ENCODE measurements at regions of chr3 and their contacts with region 1.

Region 1: GRCh38 chr3:44976002-44976815 is at the starts of genes EXOSC7 and ZDHHC3:
- DNase-seq: peak; percentile 75 to 95 (median 86)
- ATAC-seq: peak; percentile 97
- H3K4me3 ChIP-seq: peak within 1 kb of the TSS; percentile 97 to 99
- H3K4me3 Mint-ChIP-seq: peak within 1 kb of the TSS; percentile 93
- H3K27ac ChIP-seq: peak within 1 kb of the TSS; percentile 90 to 94
- H3K27ac Mint-ChIP-seq: peak within 1 kb of the TSS; percentile 95
- H3K4me1 ChIP-seq: peaks cover 37% of the 10 kb centered on the region
- H3K4me1 Mint-ChIP-seq: peaks cover 65% of the 10 kb centered on the region
- H3K27me3 ChIP-seq: no peaks in the 10 kb centered on the region
- H3K27me3 Mint-ChIP-seq: no peaks in the 10 kb centered on the region
- CTCF ChIP-seq: no peak
- total RNA-seq, gene EXOSC7: 35.2 to 39.3 TPM
- total RNA-seq, gene ZDHHC3: 42.2 to 42.4 TPM

Region 2: DNA sequence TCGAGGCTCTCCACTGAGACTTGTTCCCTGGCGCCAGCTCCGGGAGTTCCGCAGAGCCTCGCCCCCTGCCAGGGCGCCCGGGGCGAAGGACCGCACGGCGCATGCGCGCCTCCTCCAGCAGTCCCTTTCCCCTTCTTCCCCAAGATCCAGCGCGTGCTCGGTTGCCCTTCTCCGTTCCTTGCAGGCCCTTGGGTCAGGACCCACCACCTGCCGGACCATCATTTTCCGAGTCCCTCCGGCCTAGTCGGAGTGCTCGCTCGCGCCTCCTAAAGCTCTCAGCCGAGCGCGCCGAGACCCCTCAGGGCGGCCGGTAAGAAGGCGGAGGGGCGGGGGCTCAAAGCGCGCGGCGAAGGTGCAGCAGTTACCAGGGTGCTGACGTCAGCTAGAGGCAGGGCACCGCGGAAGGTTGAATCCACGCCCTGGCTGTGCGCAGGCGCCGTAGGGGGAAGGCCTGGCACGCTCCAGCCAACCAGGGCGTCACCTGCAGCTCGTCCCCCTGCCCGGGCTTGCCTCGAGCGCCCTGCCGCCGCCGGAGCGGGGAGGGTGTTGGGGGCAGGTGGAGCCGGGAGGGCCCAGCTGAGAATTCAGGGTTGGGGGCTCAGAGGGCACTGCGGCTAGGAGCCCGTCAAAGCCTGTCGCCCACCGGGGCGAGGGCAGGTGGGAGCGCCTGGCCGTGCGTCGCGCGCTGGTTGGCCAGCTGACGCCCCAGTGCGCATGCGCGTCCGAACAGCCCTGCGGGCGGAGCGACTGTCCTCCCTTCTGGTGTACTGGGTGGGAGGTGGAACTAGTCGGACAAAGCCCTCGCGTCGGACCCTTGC is 638.0 kb before region 1 on chr3 and contains the start of gene TCAIM:
- CTCF ChIA-PET with region 1: no interaction called
- POLR2A ChIA-PET with region 1: interaction called, 6 read pairs
- intact Hi-C with region 1: loop called (anchors 1 to 5 kb)
- DNase-seq: peak; percentile 97 to 100 (median 99)
- ATAC-seq: peak; percentile 92
- H3K4me3 ChIP-seq: peak within 1 kb of the TSS; percentile 76 to 91
- H3K4me3 Mint-ChIP-seq: peak within 1 kb of the TSS; percentile 93
- H3K27ac ChIP-seq: peak within 1 kb of the TSS; percentile 88 to 93
- H3K27ac Mint-ChIP-seq: peak within 1 kb of the TSS; percentile 97
- H3K4me1 ChIP-seq: peaks cover 15% of the 10 kb centered on the region
- H3K4me1 Mint-ChIP-seq: peaks cover 32% of the 10 kb centered on the region
- H3K27me3 ChIP-seq: no peaks in the 10 kb centered on the region
- H3K27me3 Mint-ChIP-seq: peaks cover 6% of the 10 kb centered on the region
- CTCF ChIP-seq: no peak
- total RNA-seq, gene TCAIM: 3.1 to 3.7 TPM

Region 3: DNA sequence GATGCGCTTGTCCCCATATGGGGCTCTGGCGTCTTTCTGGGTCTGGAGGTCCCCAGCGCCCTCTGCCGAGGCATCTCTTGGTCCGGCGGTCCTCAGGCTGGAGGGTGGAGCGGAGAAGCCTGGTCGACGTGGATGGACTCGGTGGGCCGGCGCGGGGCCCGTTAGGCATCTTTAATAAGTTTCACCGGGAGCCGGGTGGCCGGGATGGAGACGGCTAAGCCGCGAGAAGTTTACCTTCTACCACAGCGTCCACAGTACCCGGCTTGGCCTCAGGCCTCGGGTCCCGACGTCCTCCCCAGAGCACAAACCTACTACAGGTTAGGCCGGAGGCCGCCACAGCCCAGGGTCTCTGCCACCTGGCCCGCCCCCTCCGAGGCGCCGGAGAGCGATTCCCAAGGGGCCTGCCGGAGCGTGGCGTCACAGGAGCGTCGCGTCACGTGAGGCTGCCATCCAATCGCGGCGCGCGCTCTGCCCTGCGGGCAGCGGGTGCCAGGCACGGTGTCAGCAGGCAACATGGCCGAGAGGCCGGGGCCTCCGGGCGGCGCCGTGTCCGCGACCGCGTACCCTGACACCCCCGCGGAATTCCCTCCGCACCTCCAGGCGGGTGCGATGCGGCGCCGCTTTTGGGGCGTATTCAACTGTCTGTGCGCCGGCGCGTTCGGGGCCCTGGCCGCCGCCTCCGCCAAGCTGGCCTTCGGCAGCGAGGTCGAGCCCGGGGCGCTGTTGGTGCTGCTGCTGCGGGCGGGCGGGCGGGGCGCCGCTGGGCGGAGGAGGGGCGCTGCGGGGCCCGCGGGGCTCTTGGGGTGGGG is 114.6 kb before region 1 on chr3 and contains the start of gene TMEM42:
- CTCF ChIA-PET with region 1: no interaction called
- POLR2A ChIA-PET with region 1: interaction called, 6 read pairs
- intact Hi-C with region 1: loop called (anchors 2 kb)
- DNase-seq: peak; percentile 72 to 96 (median 87)
- ATAC-seq: peak; percentile 89
- H3K4me3 ChIP-seq: peak within 1 kb of the TSS; percentile 86 to 92
- H3K4me3 Mint-ChIP-seq: peak within 1 kb of the TSS; percentile 87
- H3K27ac ChIP-seq: peak within 1 kb of the TSS; percentile 90 to 91
- H3K27ac Mint-ChIP-seq: peak within 1 kb of the TSS; percentile 92
- H3K4me1 ChIP-seq: peaks cover 31% of the 10 kb centered on the region
- H3K4me1 Mint-ChIP-seq: peaks cover 45% of the 10 kb centered on the region
- H3K27me3 ChIP-seq: no peaks in the 10 kb centered on the region
- H3K27me3 Mint-ChIP-seq: no peaks in the 10 kb centered on the region
- CTCF ChIP-seq: no peak
- total RNA-seq, gene TMEM42: 6.6 to 8.3 TPM

Region 4: DNA sequence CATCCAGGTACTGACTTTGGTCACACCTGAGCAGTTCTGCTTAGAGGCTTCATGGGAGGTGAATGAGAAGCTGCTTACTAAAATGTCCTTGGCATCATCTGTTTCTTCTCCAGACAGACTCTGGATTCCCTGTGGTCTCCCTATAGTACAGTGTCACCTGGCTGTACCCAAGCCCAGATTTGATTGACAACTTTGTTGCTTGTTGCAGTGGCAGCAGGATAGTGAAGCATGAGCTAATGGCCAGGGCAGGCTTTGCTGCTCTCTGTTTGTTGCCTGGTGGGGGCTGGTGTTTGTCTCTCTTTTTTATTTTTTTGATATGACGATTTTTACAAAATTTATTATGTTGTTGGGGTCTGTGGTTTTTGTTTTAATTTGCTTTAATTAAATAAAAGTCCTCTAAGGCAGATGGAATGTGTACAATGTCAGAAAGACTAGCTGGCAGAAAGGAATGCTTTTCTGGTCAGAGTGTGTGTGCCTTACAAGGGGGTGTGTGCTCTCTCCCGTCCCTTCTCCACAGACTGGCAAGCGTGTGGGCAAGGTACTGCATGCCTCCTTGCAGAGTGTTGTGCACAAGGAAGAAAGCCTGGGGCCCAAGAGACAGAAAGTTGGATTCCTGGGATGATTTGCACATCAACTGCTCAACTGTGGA is 34.6 kb after region 1 on chr3:
- CTCF ChIA-PET with region 1: no interaction called
- POLR2A ChIA-PET with region 1: interaction called, 10 read pairs
- intact Hi-C with region 1: no loop called
- DNase-seq: no peak
- ATAC-seq: no peak
- H3K4me3 ChIP-seq: no peak overlapping the region
- H3K4me3 Mint-ChIP-seq: no peak overlapping the region
- H3K27ac ChIP-seq: no peak overlapping the region
- H3K27ac Mint-ChIP-seq: no peak overlapping the region
- H3K4me1 ChIP-seq: peaks cover 5% of the 10 kb centered on the region
- H3K4me1 Mint-ChIP-seq: peaks cover 9% of the 10 kb centered on the region
- H3K27me3 ChIP-seq: no peaks in the 10 kb centered on the region
- H3K27me3 Mint-ChIP-seq: no peaks in the 10 kb centered on the region
- CTCF ChIP-seq: no peak

Region 5: GRCh38 chr3:45387636-45388348 is 411.6 kb after region 1 on chr3:
- CTCF ChIA-PET with region 1: no interaction called
- POLR2A ChIA-PET with region 1: no interaction called
- intact Hi-C with region 1: loop called in 1 of 2 experiments (anchors 1 kb)
- DNase-seq: no peak
- ATAC-seq: no peak
- H3K4me3 ChIP-seq: peak overlapping the region; percentile 91 to 96
- H3K4me3 Mint-ChIP-seq: peak overlapping the region; percentile 99
- H3K27ac ChIP-seq: peak overlapping the region; percentile 17 to 57
- H3K27ac Mint-ChIP-seq: peak overlapping the region; percentile 93
- H3K4me1 ChIP-seq: peaks cover 15% of the 10 kb centered on the region
- H3K4me1 Mint-ChIP-seq: peaks cover 23% of the 10 kb centered on the region
- H3K27me3 ChIP-seq: no peaks in the 10 kb centered on the region
- H3K27me3 Mint-ChIP-seq: no peaks in the 10 kb centered on the region
- CTCF ChIP-seq: no peak